ENCODE measurements at regions of chr10 and their contacts with region 1.

Region 1: GRCh38 chr10:75202321-75203045 is 8.1 kb upstream of the VDAC2 start:
- DNase-seq: peak; percentile 56 to 85
- H3K4me3 ChIP-seq: no peak overlapping the region
- H3K27ac ChIP-seq: peak overlapping the region; percentile 52 to 68
- H3K4me1 ChIP-seq: peaks cover 0 to 14% (median 9%) of the 10 kb centered on the region in 4 donors
- H3K27me3 ChIP-seq: no peaks in the 10 kb centered on the region
- CTCF ChIP-seq: no peak

Region 2: DNA sequence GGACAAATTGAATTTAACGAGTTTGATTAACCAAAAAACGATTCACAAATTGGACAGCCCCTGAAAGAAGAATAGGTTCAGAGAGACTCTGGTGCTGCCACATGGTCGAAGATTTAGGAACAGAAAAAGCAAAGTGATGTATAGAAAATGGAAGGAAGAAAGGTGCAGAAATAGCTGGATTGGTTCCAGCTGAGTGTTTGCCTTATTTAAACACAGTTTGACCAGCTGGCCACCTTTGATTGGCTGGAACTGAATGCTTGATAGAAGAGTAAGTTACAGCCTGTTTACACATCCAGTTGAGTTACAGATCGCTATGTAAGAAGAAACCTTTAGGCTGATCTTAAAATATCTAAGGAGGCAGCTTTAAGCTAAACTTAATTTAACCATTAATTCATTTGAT is 416.4 kb before region 1 on chr10:
- intact Hi-C with region 1: no loop called
- DNase-seq: no peak
- H3K4me3 ChIP-seq: no peak overlapping the region
- H3K27ac ChIP-seq: no peak overlapping the region
- H3K4me1 ChIP-seq: no peaks in the 10 kb centered on the region
- H3K27me3 ChIP-seq: no peaks in the 10 kb centered on the region
- CTCF ChIP-seq: no peak

Region 3: DNA sequence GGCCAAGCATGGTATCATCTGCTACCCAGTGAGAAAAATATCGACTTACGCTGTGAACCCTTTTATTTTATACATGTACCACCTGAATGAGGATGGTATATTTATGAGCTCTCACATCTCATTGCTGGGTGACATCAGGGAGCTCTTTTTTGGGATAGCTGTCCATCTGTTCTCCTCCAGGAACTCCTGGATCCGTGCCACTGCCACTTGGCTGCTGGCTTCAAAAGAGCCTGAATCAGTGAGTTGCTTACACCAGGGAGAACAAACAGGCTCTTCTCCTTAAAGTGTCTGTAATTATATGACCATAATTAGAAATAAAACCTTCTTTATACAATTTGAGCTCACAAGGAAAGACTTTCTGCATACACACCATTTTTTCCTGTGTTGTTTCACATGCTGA is 269.8 kb before region 1 on chr10:
- intact Hi-C with region 1: no loop called
- DNase-seq: peak; percentile 39 to 68
- H3K4me3 ChIP-seq: no peak overlapping the region
- H3K27ac ChIP-seq: no peak overlapping the region
- H3K4me1 ChIP-seq: peaks cover 0 to 60% (median 26%) of the 10 kb centered on the region in 4 donors
- H3K27me3 ChIP-seq: no peaks in the 10 kb centered on the region
- CTCF ChIP-seq: no peak

Region 4: DNA sequence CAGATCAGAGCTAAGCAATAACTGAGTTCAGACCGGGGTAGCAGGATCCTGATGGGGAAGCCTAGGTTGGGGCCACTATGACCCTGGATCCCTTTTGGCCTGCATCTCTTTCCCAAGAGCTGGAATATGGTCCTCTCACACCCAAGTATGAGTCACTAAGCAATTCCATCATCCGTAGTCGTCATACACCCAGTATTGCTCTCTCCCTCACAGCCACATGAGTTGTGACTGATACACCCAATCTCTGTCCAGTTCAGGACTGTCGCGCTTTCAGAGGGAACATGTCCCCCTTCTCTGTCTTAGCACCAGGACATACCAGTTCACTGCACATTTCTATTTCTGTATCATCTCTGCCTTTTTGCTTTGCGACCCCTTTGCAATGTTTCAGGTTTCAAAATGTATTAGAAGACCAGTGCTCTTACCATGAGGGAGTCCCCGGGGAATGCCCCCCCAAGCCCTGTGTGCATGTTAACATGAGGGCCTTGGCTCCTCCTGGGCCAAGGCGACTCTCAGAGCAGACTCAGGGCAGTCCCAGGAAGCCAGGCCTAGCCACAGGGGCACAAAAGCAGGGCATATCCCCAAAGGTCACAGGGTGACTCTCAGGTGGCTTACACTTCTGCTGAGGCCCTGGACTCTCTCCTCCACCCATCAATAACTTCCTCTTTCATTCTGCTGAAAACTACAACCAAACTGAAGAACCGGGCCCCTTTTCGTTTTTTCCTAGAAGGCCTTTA is 166.3 kb before region 1 on chr10:
- intact Hi-C with region 1: no loop called
- DNase-seq: no peak
- H3K4me3 ChIP-seq: no peak overlapping the region
- H3K27ac ChIP-seq: no peak overlapping the region
- H3K4me1 ChIP-seq: peaks cover 0 to 3% (median 0%) of the 10 kb centered on the region in 4 donors
- H3K27me3 ChIP-seq: no peaks in the 10 kb centered on the region
- CTCF ChIP-seq: no peak

Region 5: DNA sequence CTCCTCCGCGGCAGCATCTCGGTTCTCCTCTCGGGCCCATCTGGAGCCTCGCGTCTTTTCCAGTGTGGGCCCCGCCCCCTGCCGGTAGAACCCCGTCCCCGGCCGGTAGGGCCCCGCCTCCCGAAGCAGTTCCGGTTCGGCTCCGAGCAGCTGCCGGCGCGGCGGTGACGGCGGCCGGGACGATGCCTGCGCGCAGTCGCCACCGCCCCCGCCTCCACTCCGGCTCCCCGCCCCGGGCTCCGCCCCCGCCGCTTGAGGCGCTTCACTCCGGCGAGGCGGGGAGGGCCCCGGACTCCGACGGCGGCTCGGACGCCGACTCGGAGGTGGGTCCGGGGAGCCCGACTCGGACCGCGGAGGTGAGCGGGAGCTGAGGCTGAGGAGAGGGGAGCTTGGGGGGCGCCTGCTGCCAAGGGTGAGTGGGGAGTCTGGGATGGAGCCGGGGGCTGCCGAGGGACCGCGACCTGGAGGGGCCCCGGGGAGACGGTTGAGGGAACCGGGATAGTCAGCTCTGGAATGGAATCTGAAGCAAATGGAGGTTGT is 91.0 kb before region 1 on chr10 and contains the start of gene SAMD8:
- intact Hi-C with region 1: loop called (anchors 10 kb)
- DNase-seq: peak; percentile 96 to 99
- H3K4me3 ChIP-seq: peak within 1 kb of the TSS; percentile 76 to 86
- H3K27ac ChIP-seq: peak within 1 kb of the TSS; percentile 99
- H3K4me1 ChIP-seq: peaks cover 0 to 48% (median 24%) of the 10 kb centered on the region in 4 donors
- H3K27me3 ChIP-seq: no peaks in the 10 kb centered on the region
- CTCF ChIP-seq: peak; percentile 34 to 57

Region 6: GRCh38 chr10:75350791-75351190 is 148.3 kb after region 1 on chr10:
- intact Hi-C with region 1: no loop called
- DNase-seq: no peak
- H3K4me3 ChIP-seq: no peak overlapping the region
- H3K27ac ChIP-seq: no peak overlapping the region
- H3K4me1 ChIP-seq: no peaks in the 10 kb centered on the region
- H3K27me3 ChIP-seq: no peaks in the 10 kb centered on the region
- CTCF ChIP-seq: no peak